Posterior vena cava (tissue), 2 donors: ENCODE measurements at regions of chr6 and their contacts with region 1.

Region 1: DNA sequence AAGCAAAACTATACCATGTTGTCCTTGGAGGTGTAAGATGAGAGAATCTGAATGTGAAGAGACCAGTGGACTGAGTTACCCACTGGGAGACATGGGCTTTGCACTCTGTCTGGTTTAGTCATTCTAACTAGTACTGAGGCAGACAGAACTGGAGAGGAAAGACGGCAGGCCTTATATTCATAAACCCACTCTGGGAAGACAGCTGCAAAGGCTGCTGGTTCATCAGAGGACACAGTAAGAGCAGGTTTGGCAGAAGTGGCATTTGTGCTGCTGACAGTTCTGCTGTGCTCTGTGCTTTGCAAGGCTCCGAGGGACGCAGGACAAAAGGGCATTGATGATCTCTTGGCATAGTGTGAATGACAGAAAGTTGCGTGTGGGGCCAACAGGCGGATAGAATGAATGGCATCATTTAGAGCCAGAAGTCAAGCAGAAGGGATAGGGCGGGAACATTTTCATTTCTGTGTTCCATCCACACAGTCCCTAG is 142.3 kb upstream of the TENT5A start:
- DNase-seq: no peak

Region 2: GRCh38 chr6:81844686-81845085 is 50.1 kb before region 1 on chr6:
- intact Hi-C with region 1: loop called (anchors 5 to 10 kb)
- DNase-seq: no peak